ENCODE measurements at regions of chr1 and their contacts with region 1.

Region 1: DNA sequence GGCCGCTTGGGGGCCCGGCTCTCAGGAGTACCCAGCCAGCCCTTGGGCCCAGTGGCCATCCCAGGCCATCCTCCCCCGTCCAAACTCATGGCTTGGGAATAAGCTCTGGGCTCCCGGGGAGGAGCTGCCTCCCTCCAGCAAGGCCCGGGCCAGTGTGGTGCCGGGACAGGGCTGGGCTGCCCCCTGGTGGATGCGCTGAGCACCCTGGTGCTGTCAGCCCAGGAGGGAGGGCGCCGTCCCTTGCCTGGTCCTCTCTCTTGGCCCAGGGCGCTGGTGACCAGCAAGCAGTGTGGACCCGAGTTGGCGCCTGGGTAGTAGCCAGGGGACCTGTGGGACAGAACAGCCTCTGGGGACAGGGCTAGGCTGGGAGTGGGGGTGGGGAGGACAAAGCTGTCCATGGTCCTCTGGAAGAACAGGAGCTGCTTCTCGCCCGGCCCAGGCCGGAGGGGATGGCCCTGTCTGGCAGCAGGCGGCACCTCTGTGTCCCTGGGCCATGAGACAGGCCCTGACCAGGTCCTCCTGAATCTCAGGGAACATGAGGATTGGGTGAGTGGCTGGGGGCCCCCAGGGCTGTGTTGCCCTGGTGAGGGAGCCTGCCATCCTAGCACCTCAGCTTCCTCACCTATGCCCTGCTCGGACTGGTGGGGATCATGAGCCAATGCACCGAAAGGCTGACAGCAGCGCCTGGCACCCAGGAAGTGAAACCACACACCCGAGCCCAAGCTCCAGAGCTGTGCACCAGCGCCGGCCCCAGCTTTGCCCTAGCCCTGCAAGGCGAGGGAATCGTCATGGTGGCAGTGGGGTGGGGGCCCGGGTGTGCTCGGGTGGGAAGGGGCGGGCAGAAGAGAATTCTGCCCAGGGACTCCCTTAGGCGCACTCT is 9.4 kb downstream of the MORN1 start:
- DNase-seq: peak; percentile 45
- ATAC-seq: peak; percentile 94
- H3K4me3 ChIP-seq: no peak overlapping the region
- H3K27ac ChIP-seq: no peak overlapping the region
- H3K4me1 ChIP-seq: peaks cover 30% of the 10 kb centered on the region
- H3K27me3 ChIP-seq: no peaks in the 10 kb centered on the region
- CTCF ChIP-seq: peak; percentile 98
- EP300 ChIP-seq: no peak
- POLR2A ChIP-seq: no peak
- RAD21 ChIP-seq: peak; percentile 93

Region 2: GRCh38 chr1:2314803-2315673 is 66.9 kb before region 1 on chr1:
- CTCF ChIA-PET with region 1: no interaction called
- POLR2A ChIA-PET with region 1: no interaction called
- in situ Hi-C with region 1: no loop called
- intact Hi-C with region 1: loop called (anchors 5 kb)
- DNase-seq: peak; percentile 21
- ATAC-seq: no peak
- H3K4me3 ChIP-seq: peak overlapping the region; percentile 55 to 78 (median 64); a peak in 5 of 6 replicates
- H3K27ac ChIP-seq: no peak overlapping the region
- H3K4me1 ChIP-seq: peaks cover 79% of the 10 kb centered on the region
- H3K27me3 ChIP-seq: peaks cover 4 to 23% of the 10 kb centered on the region in 2 experiments; a peak in 3 of 5 replicates
- CTCF ChIP-seq: peak; percentile 65
- EP300 ChIP-seq: no peak
- POLR2A ChIP-seq: no peak
- RAD21 ChIP-seq: no peak

Measured in HepG2 (cell line).